Natural killer cell (primary cell): ENCODE measurements at regions of chr16 and their contacts with region 1.

Region 1: DNA sequence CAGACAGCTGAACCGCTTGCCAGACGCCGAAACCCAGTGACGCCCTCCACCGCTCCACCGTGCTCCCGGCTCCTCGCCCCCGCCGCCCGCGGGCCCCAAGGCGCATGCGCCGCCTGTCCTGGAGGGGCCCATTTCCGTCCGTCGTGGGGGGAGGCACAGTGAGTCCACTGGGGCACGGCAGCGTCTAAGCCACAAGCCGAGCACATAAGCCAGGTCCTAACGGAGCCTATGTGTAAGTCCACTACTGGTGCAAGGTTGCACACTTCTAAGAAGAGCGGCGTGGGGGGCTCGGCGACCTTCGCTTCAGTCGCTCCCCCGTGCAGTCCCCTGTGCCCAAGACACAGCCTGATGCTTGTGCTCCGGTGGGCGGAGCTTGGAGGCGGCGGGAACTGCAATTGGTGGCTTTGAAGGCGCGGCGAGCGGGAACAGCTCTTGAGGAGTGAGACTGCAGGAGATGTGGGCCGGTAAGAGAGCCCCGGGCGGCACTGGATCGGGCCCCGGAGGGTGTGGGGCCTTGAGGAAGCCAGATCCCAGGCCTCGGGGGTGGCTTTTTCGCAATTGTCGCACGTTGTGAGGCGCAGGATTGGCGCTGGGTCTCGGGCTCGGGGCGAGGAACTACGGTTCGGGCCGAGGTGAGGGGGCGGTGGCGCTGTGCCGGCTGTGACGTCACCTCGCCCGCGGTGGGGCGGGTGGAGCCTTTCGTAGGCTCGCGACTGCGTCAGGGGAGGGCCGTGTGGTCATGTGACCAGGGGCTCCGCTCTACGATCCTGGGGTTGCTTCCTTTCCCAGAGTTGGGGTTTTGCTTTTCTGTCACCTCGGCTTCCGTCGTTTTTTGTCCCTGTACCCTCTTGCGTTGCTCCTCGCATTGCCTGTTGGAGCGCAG is at the starts of genes CENPN and CMC2:
- DNase-seq: peak; percentile 99
- ATAC-seq: peak; percentile 78 to 91 (median 79)
- H3K4me3 ChIP-seq: peak within 1 kb of the TSS; percentile 74
- H3K4me3 Mint-ChIP-seq: peak within 1 kb of the TSS; percentile 99
- H3K27ac ChIP-seq: peak within 1 kb of the TSS; percentile 99
- H3K27ac Mint-ChIP-seq: peak within 1 kb of the TSS; percentile 97 to 99
- H3K4me1 ChIP-seq: peaks cover 32% of the 10 kb centered on the region
- H3K4me1 Mint-ChIP-seq: peaks cover 35 to 36% of the 10 kb centered on the region in 2 donors
- H3K27me3 ChIP-seq: no peaks in the 10 kb centered on the region
- H3K27me3 Mint-ChIP-seq: no peaks in the 10 kb centered on the region
- CTCF ChIP-seq: no peak
- total RNA-seq, gene CENPN: 6.6 to 11.6 (median 9.0) TPM
- total RNA-seq, gene CMC2: 52.3 to 63.5 (median 63.2) TPM

Region 2: DNA sequence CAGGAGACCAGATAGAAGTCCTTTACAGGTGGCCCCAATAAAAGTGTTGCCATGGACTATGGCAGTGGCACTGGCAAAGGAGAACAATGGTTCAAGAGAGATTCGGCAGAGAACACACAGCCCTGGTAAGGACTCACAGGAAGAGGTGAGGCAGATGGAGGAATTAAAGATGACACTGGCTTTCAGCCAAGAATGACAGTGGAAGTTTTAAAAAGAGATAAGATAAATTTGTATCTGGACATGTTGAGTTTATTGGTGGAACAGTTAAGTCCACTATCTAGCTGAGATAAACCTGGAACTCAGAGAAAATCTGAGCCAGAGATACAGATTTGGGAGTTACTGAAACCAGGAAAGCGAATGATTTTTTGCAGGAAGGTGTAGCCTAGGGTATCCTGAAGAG is 20.5 kb before region 1 on chr16:
- intact Hi-C with region 1: no loop called
- DNase-seq: no peak
- ATAC-seq: no peak
- H3K4me3 ChIP-seq: no peak overlapping the region
- H3K4me3 Mint-ChIP-seq: no peak overlapping the region
- H3K27ac ChIP-seq: no peak overlapping the region
- H3K27ac Mint-ChIP-seq: peak overlapping the region in 1 of 2 donors; percentile 0
- H3K4me1 ChIP-seq: no peaks in the 10 kb centered on the region
- H3K4me1 Mint-ChIP-seq: peaks cover 17 to 19% of the 10 kb centered on the region in 2 donors
- H3K27me3 ChIP-seq: no peaks in the 10 kb centered on the region
- H3K27me3 Mint-ChIP-seq: no peaks in the 10 kb centered on the region
- CTCF ChIP-seq: no peak

Region 3: DNA sequence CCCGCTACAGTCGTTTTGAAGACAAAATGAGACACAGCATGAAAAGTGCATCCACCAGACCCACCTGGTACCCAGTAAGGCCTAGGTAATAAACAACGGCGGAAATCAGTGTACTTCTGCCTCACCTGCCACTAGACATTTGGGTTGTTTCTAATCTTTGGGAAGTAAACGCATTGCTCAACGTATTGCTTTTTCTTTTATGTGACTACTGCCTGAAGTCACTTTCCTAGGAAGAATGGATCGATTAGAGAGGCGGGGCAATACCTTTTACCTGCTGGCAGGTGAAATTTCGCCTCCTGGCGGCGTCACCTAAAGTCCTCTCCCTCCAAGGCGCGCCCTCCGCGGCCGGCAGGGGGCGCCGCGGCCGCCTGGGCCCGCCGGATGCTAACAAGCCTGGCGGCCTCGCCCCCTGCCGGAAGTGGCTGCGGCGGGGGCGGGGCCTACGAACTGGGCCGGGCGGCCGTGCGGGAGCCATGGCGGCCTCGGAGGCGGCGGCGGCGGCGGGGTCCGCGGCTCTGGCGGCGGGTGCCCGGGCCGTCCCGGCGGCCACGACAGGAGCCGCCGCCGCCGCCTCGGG is 28.4 kb after region 1 on chr16 and contains the start of gene ATMIN:
- intact Hi-C with region 1: loop called (anchors 1 kb)
- DNase-seq: peak; percentile 89 to 95
- ATAC-seq: peak; percentile 98
- H3K4me3 ChIP-seq: peak within 1 kb of the TSS; percentile 38
- H3K4me3 Mint-ChIP-seq: peak within 1 kb of the TSS; percentile 86
- H3K27ac ChIP-seq: no peak within 1 kb of the TSS
- H3K27ac Mint-ChIP-seq: peak within 1 kb of the TSS; percentile 45 to 55
- H3K4me1 ChIP-seq: peaks cover 15% of the 10 kb centered on the region
- H3K4me1 Mint-ChIP-seq: peaks cover 24 to 26% of the 10 kb centered on the region in 2 donors
- H3K27me3 ChIP-seq: no peaks in the 10 kb centered on the region
- H3K27me3 Mint-ChIP-seq: no peaks in the 10 kb centered on the region
- CTCF ChIP-seq: peak; percentile 98
- total RNA-seq, gene ATMIN: 35.3 to 51.8 (median 39.9) TPM

Region 4: DNA sequence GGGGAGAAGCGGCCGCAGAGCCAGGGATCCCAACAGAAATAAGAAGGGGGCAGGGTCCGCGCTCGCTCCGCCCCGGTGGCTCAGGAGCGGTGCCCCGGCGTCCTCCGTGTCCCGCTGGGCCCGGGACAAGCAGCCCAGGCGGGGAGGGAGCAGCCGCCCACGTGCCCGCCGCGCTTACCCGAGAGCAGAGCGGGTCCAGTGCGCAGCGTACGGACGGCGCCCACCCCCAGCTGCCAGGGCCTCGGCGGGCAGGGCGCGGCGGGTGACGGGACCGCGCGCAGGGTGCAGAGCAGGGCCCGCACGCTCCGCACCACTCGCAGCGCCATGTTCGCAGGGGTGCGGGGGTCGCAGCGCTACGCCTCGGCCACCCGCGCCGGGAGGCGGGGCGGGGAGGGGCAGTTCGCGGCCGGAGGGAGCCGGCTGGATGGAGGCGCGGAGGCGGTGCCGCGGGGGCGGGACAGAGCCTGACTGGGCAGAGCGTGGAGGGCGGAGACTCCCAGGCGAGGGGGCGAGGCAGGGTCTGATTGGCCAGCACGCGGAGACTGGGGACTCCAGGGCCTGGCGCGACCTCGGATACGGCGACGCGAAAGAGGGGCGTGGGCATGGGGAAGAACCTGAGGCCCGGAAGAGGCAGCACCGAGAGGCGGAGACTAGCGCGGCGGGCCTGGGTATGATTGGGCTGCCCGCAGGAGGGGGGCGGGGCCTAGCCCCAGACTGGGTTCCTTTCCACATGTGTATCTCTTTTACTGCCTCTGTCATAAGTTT is 89.1 kb after region 1 on chr16 and contains the start of gene GCSH:
- intact Hi-C with region 1: loop called (anchors 5 kb)
- DNase-seq: peak; percentile 98 to 99
- ATAC-seq: peak; percentile 96 to 99 (median 96)
- H3K4me3 ChIP-seq: peak within 1 kb of the TSS; percentile 43
- H3K4me3 Mint-ChIP-seq: peak within 1 kb of the TSS; percentile 91
- H3K27ac ChIP-seq: peak within 1 kb of the TSS; percentile 19
- H3K27ac Mint-ChIP-seq: peak within 1 kb of the TSS; percentile 72 to 84
- H3K4me1 ChIP-seq: peaks cover 8% of the 10 kb centered on the region
- H3K4me1 Mint-ChIP-seq: peaks cover 6% of the 10 kb centered on the region in 2 donors
- H3K27me3 ChIP-seq: no peaks in the 10 kb centered on the region
- H3K27me3 Mint-ChIP-seq: no peaks in the 10 kb centered on the region
- CTCF ChIP-seq: no peak
- total RNA-seq, gene GCSH: 2.6 to 4.3 (median 2.7) TPM